ENCODE measurements at regions of chr19 and their contacts with region 1.

Region 1: DNA sequence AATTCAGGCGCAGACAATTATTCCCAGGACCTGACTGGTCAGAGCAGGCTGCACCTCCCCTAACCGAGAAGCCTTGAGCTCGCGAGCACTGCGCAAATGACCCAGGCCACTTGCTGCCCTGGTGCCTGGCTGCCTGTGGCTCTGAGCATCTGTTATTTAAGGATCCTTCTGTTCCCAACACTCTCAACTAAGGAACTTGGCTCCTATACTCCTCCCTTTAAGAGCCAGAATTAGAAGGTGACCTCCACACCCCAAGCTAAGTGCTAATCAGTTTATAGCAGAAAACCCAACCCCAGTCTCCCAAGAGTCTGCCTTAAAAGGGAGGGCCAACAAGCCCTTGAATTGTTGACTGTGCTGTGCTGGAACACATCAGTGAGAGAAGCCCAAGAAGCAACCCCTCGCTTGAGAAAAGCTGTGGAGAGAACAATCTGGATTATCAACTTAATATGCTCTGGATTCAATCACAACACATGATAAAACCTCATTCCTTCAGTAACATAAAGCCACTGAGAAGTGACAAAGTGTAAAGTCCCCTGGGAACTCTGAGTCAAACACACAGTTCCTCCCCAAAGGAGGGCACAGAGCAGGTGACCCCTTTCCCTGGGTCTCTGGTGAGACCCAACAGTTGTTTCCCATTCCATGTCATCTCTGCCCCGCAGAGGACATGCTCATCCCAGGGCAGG is 14.6 kb downstream of the AKAP8L start:
- DNase-seq: no peak
- H3K4me3 ChIP-seq: no peak overlapping the region
- H3K27ac ChIP-seq: peak overlapping the region; percentile 60 to 64
- H3K4me1 ChIP-seq: no peaks in the 10 kb centered on the region
- H3K27me3 ChIP-seq: no peaks in the 10 kb centered on the region
- CTCF ChIP-seq: no peak
- POLR2A ChIP-seq: no peak

Region 2: DNA sequence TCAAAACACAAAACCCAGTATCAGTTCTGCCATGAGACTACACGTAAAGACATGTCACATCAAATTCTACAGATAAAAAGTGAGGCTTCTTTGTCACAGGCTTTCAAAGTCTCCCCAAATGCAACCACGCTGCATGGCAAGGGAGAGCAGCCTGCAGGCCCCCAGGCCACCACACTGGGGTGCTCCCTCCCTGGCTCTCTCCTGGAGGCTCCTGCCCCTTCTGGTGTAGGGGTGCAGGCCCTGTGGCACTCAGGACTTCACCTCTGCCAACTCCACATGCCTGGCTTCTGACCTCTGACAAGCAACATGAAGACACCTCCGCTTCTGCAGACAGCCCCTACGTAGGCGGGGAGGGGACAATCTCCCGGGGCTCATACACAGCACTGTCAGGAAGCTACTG is 39.0 kb before region 1 on chr19:
- intact Hi-C with region 1: loop called (anchors 2 kb)
- DNase-seq: no peak
- H3K4me3 ChIP-seq: no peak overlapping the region
- H3K27ac ChIP-seq: no peak overlapping the region
- H3K4me1 ChIP-seq: no peaks in the 10 kb centered on the region
- H3K27me3 ChIP-seq: no peaks in the 10 kb centered on the region
- CTCF ChIP-seq: no peak
- POLR2A ChIP-seq: no peak

Region 3: GRCh38 chr19:15379996-15380647 is 24.1 kb before region 1 on chr19:
- intact Hi-C with region 1: no loop called
- DNase-seq: peak; percentile 59
- H3K4me3 ChIP-seq: peak overlapping the region; percentile 80 to 94
- H3K27ac ChIP-seq: peak overlapping the region; percentile 92 to 96
- H3K4me1 ChIP-seq: peaks cover 17% of the 10 kb centered on the region
- H3K27me3 ChIP-seq: no peaks in the 10 kb centered on the region
- CTCF ChIP-seq: no peak
- POLR2A ChIP-seq: peak; percentile 38

Region 4: GRCh38 chr19:15769585-15769984 is 365.3 kb after region 1 on chr19:
- intact Hi-C with region 1: no loop called
- DNase-seq: no peak
- H3K4me3 ChIP-seq: no peak overlapping the region
- H3K27ac ChIP-seq: no peak overlapping the region
- H3K4me1 ChIP-seq: no peaks in the 10 kb centered on the region
- H3K27me3 ChIP-seq: no peaks in the 10 kb centered on the region
- CTCF ChIP-seq: no peak
- POLR2A ChIP-seq: no peak

Measured in prostate gland (tissue), 2 donors.